Dorsolateral prefrontal cortex (tissue), 120 donors: ENCODE measurements at regions of chr5 and their contacts with region 1.

Region 1: GRCh38 chr5:131277875-131278740 is 14.3 kb downstream of the CDC42SE2 start:
- DNase-seq: no peak
- H3K4me3 ChIP-seq: no peak overlapping the region
- H3K27ac ChIP-seq: peak overlapping the region in 54 of 59 donors; percentile 10 to 90 (median 66)
- H3K27me3 ChIP-seq: no peaks in the 10 kb centered on the region
- CTCF ChIP-seq: no peak

Region 2: GRCh38 chr5:131186561-131187256 is 91.4 kb before region 1 on chr5:
- intact Hi-C with region 1: no loop called
- DNase-seq: no peak
- H3K4me3 ChIP-seq: no peak overlapping the region
- H3K27ac ChIP-seq: peak overlapping the region in 1 of 59 donors; percentile 28
- H3K27me3 ChIP-seq: no peaks in the 10 kb centered on the region
- CTCF ChIP-seq: no peak

Region 3: GRCh38 chr5:131382407-131383395 is 104.6 kb after region 1 on chr5:
- intact Hi-C with region 1: loop called in 1 of 2 experiments (anchors 10 kb)
- DNase-seq: no peak
- H3K4me3 ChIP-seq: peak overlapping the region in 1 of 59 donors; percentile 7
- H3K27ac ChIP-seq: peak overlapping the region in 58 of 59 donors; percentile 9 to 95 (median 75)
- H3K27me3 ChIP-seq: no peaks in the 10 kb centered on the region
- CTCF ChIP-seq: peak in 52 of 56 donors; percentile 15 to 64 (median 46)